GM10248 (cell line): ENCODE measurements at regions of chr14 and their contacts with region 1.

Region 1: GRCh38 chr14:49867831-49868723 is 15.5 kb upstream of the NEMF start:
- DNase-seq: peak; percentile 95
- CTCF ChIP-seq: no peak

Region 2: GRCh38 chr14:49692811-49693734 is 175.0 kb before region 1 on chr14 and contains the start of gene KLHDC1:
- CTCF ChIA-PET with region 1: no interaction called
- POLR2A ChIA-PET with region 1: no interaction called
- DNase-seq: peak; percentile 78
- CTCF ChIP-seq: no peak

Region 3: GRCh38 chr14:49786315-49787110 is 81.6 kb before region 1 on chr14:
- CTCF ChIA-PET with region 1: no interaction called
- POLR2A ChIA-PET with region 1: interaction called, 10 read pairs
- DNase-seq: no peak
- CTCF ChIP-seq: no peak

Region 4: GRCh38 chr14:49879683-49880204 is 11.7 kb after region 1 on chr14:
- CTCF ChIA-PET with region 1: interaction called, 38 read pairs
- POLR2A ChIA-PET with region 1: no interaction called
- DNase-seq: peak; percentile 69
- CTCF ChIP-seq: peak; percentile 58

Region 5: GRCh38 chr14:50109342-50109741 is 241.3 kb after region 1 on chr14:
- CTCF ChIA-PET with region 1: interaction called, 183 read pairs
- POLR2A ChIA-PET with region 1: interaction called, 5 read pairs
- DNase-seq: no peak
- CTCF ChIP-seq: no peak